ENCODE measurements at regions of chr11 and their contacts with region 1.

Region 1: GRCh38 chr11:95200781-95201457 is 30.1 kb downstream of the SESN3 start:
- DNase-seq: no peak
- ATAC-seq: no peak
- H3K4me3 ChIP-seq: no peak overlapping the region
- H3K4me3 Mint-ChIP-seq: no peak overlapping the region
- H3K27ac ChIP-seq: no peak overlapping the region
- H3K27ac Mint-ChIP-seq: no peak overlapping the region
- H3K4me1 ChIP-seq: peaks cover 10 to 18% of the 10 kb centered on the region in 2 donors
- H3K4me1 Mint-ChIP-seq: peaks cover 68% of the 10 kb centered on the region
- H3K27me3 ChIP-seq: no peaks in the 10 kb centered on the region
- H3K27me3 Mint-ChIP-seq: no peaks in the 10 kb centered on the region
- CTCF ChIP-seq: no peak

Region 2: GRCh38 chr11:94895451-94895850 is 305.5 kb before region 1 on chr11:
- CTCF ChIA-PET with region 1: no interaction called
- POLR2A ChIA-PET with region 1: no interaction called
- intact Hi-C with region 1: no loop called
- DNase-seq: no peak
- ATAC-seq: no peak
- H3K4me3 ChIP-seq: no peak overlapping the region
- H3K4me3 Mint-ChIP-seq: no peak overlapping the region
- H3K27ac ChIP-seq: no peak overlapping the region
- H3K27ac Mint-ChIP-seq: no peak overlapping the region
- H3K4me1 ChIP-seq: no peaks in the 10 kb centered on the region
- H3K4me1 Mint-ChIP-seq: no peaks in the 10 kb centered on the region
- H3K27me3 ChIP-seq: no peaks in the 10 kb centered on the region
- H3K27me3 Mint-ChIP-seq: no peaks in the 10 kb centered on the region
- CTCF ChIP-seq: no peak

Region 3: GRCh38 chr11:95212609-95213008 is 11.7 kb after region 1 on chr11:
- CTCF ChIA-PET with region 1: interaction called, 3 read pairs
- POLR2A ChIA-PET with region 1: interaction called, 9 read pairs
- intact Hi-C with region 1: loop called (anchors 1 kb)
- DNase-seq: no peak
- ATAC-seq: no peak
- H3K4me3 ChIP-seq: no peak overlapping the region
- H3K4me3 Mint-ChIP-seq: no peak overlapping the region
- H3K27ac ChIP-seq: no peak overlapping the region
- H3K27ac Mint-ChIP-seq: no peak overlapping the region
- H3K4me1 ChIP-seq: peaks cover 13 to 23% of the 10 kb centered on the region in 2 donors
- H3K4me1 Mint-ChIP-seq: peaks cover 45% of the 10 kb centered on the region
- H3K27me3 ChIP-seq: no peaks in the 10 kb centered on the region
- H3K27me3 Mint-ChIP-seq: no peaks in the 10 kb centered on the region
- CTCF ChIP-seq: no peak

Region 4: GRCh38 chr11:95222817-95223216 is 21.9 kb after region 1 on chr11:
- CTCF ChIA-PET with region 1: no interaction called
- POLR2A ChIA-PET with region 1: no interaction called
- intact Hi-C with region 1: loop called (anchors 2 kb)
- DNase-seq: no peak
- ATAC-seq: peak; percentile 47
- H3K4me3 ChIP-seq: no peak overlapping the region
- H3K4me3 Mint-ChIP-seq: peak overlapping the region; percentile 40
- H3K27ac ChIP-seq: peak overlapping the region in 1 of 2 donors; percentile 59
- H3K27ac Mint-ChIP-seq: peak overlapping the region; percentile 4
- H3K4me1 ChIP-seq: peaks cover 10 to 14% of the 10 kb centered on the region in 2 donors
- H3K4me1 Mint-ChIP-seq: peaks cover 55% of the 10 kb centered on the region
- H3K27me3 ChIP-seq: no peaks in the 10 kb centered on the region
- H3K27me3 Mint-ChIP-seq: no peaks in the 10 kb centered on the region
- CTCF ChIP-seq: no peak

Measured in B cell (primary cell).